ENCODE measurements at regions of chr17 and their contacts with region 1.

Region 1: DNA sequence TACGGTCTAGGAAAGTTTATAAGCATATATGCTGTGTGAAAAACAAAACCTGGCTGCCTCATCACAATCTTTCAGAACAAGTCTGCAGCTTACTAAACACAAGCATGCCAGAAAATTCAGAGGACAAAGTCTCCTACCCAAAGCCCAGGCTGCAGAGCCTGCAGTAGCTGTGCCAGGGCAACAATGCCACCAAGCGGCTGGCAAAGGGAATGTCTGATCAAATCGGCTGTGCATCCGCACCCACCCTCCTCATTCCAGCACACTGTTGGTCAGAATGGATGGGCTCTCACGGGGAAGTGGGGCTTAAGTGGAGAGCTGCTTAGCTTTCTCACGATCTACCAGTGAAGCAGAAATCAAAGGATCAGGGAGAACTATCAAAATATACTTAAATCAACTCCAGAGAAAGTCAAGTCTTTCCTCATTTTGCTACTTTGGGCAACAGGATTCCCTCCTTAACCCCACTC is 73.5 kb downstream of the CYTH1 start:
- DNase-seq: peak; percentile 72
- H3K4me3 ChIP-seq: no peak overlapping the region
- H3K27ac ChIP-seq: no peak overlapping the region
- H3K4me1 ChIP-seq: peaks cover 16% of the 10 kb centered on the region
- H3K27me3 ChIP-seq: no peaks in the 10 kb centered on the region
- CTCF ChIP-seq: peak; percentile 87 to 90
- POLR2A ChIP-seq: no peak

Region 2: GRCh38 chr17:78541488-78542237 is 166.9 kb before region 1 on chr17:
- CTCF ChIA-PET with region 1: no interaction called
- POLR2A ChIA-PET with region 1: no interaction called
- dilution Hi-C with region 1: no loop called
- intact Hi-C with region 1: no loop called
- DNase-seq: no peak
- H3K4me3 ChIP-seq: no peak overlapping the region
- H3K27ac ChIP-seq: no peak overlapping the region
- H3K4me1 ChIP-seq: no peaks in the 10 kb centered on the region
- H3K27me3 ChIP-seq: no peaks in the 10 kb centered on the region
- CTCF ChIP-seq: no peak
- POLR2A ChIP-seq: no peak

Region 3: GRCh38 chr17:78589885-78590284 is 118.7 kb before region 1 on chr17:
- CTCF ChIA-PET with region 1: interaction called, 3 read pairs
- POLR2A ChIA-PET with region 1: no interaction called
- dilution Hi-C with region 1: no loop called
- intact Hi-C with region 1: loop called (anchors 2 kb)
- DNase-seq: no peak
- H3K4me3 ChIP-seq: no peak overlapping the region
- H3K27ac ChIP-seq: no peak overlapping the region
- H3K4me1 ChIP-seq: peaks cover 15% of the 10 kb centered on the region
- H3K27me3 ChIP-seq: peaks cover 0 to 5% of the 10 kb centered on the region in 2 experiments
- CTCF ChIP-seq: no peak
- POLR2A ChIP-seq: no peak

Region 4: DNA sequence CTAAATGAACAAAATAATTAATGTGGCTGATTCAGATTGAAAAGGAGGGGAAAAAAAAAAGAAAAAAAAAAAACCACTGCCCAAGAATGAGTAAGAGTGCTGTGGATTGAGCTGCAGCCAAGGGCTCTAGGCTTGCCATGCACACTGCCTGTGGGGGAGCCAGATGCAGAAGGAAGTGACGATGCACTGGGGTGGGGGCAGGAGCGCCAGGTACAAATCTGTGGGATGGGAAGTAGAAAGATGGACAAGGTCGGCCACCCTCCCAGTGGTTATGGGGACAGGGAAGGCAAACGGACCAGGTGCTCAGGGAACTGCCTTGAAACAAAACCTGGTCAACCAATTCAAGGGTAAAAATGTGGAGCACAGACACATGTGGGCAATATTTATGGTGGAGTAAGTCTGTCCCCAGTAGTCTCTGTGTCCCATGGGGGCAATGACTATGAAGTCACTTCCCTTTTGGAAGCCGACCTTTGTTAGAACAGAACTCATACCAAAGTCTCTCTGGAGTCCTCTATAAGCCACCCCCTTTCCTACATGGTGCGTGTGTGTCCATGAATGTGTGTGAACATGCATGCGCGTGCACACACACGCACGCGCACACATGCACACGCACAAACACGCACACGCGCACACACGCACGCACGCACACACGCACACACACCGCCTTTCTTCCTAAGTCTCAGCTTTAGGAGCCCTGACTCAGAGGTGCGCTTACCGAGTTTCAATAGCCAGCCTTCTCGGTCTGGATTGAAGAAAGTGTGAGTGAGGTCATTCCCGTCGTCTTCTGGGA is 10.8 kb before region 1 on chr17:
- CTCF ChIA-PET with region 1: interaction called, 13 read pairs
- POLR2A ChIA-PET with region 1: no interaction called
- dilution Hi-C with region 1: no loop called
- intact Hi-C with region 1: no loop called
- DNase-seq: no peak
- H3K4me3 ChIP-seq: no peak overlapping the region
- H3K27ac ChIP-seq: no peak overlapping the region
- H3K4me1 ChIP-seq: no peaks in the 10 kb centered on the region
- H3K27me3 ChIP-seq: no peaks in the 10 kb centered on the region
- CTCF ChIP-seq: no peak
- POLR2A ChIP-seq: no peak

Region 5: DNA sequence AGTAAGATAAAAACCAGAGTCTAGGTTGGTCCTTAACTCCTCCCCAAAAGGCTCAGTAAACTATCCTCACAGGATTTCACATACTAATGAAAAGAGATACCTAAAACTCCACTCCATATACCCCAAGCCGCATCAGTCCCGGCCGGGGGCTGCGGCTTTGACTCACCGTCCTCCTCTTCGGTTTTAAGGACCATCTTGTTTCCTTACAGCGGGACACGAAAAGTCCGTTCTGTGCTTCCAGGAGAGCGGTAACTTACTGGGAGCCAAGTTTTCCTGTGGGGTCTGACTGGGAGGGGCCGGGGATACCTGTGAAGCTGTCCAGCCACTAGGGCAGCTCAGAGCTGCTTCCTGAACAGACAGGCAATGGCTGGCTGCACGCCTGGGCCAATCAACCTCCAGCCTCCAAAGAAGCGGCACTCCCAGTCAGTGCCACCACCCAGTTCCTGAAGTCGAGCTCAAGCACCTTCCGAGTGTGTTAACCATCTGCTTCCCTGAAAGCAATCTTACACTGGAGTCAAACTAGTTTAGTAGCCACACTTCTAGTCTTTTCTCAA is 28.1 kb after region 1 on chr17:
- CTCF ChIA-PET with region 1: interaction called, 17 read pairs
- POLR2A ChIA-PET with region 1: no interaction called
- dilution Hi-C with region 1: no loop called
- intact Hi-C with region 1: no loop called
- DNase-seq: peak; percentile 79
- H3K4me3 ChIP-seq: peak overlapping the region; percentile 47 to 77 (median 54)
- H3K27ac ChIP-seq: peak overlapping the region; percentile 83
- H3K4me1 ChIP-seq: peaks cover 29% of the 10 kb centered on the region
- H3K27me3 ChIP-seq: no peaks in the 10 kb centered on the region
- CTCF ChIP-seq: peak in 1 of 2 donors; percentile 23
- POLR2A ChIP-seq: no peak

Region 6: GRCh38 chr17:78745407-78746088 is 37.0 kb after region 1 on chr17:
- CTCF ChIA-PET with region 1: interaction called, 14 read pairs
- POLR2A ChIA-PET with region 1: no interaction called
- dilution Hi-C with region 1: no loop called
- intact Hi-C with region 1: loop called (anchors 1 kb)
- DNase-seq: peak; percentile 58
- H3K4me3 ChIP-seq: no peak overlapping the region
- H3K27ac ChIP-seq: no peak overlapping the region
- H3K4me1 ChIP-seq: peaks cover 15% of the 10 kb centered on the region
- H3K27me3 ChIP-seq: no peaks in the 10 kb centered on the region
- CTCF ChIP-seq: peak; percentile 37
- POLR2A ChIP-seq: no peak

Measured in endothelial cell of umbilical vein (primary cell).